GM12878 (cell line): ENCODE measurements at regions of chr4 and their contacts with region 1.

Region 1: GRCh38 chr4:129641179-129641578 is 545.2 kb downstream of the C4orf33 start:
- DNase-seq: peak; percentile 8
- ATAC-seq: peak; percentile 82
- H3K4me3 ChIP-seq: no peak overlapping the region
- H3K27ac ChIP-seq: no peak overlapping the region
- H3K4me1 ChIP-seq: no peaks in the 10 kb centered on the region
- H3K27me3 ChIP-seq: no peaks in the 10 kb centered on the region
- CTCF ChIP-seq: peak; percentile 69 to 80 (median 74)
- EP300 ChIP-seq: no peak
- POLR2A ChIP-seq: no peak
- RAD21 ChIP-seq: peak; percentile 66

Region 2: GRCh38 chr4:129362674-129363274 is 278.4 kb before region 1 on chr4:
- CTCF ChIA-PET with region 1: interaction called, 145 read pairs
- POLR2A ChIA-PET with region 1: no interaction called
- RAD21 ChIA-PET with region 1: interaction called, 37 read pairs
- SMC1A ChIA-PET with region 1: interaction called, 38 read pairs
- in situ Hi-C with region 1: loop called (anchors 5 kb)
- intact Hi-C with region 1: loop called (anchors 1 kb)
- DNase-seq: peak; percentile 13
- ATAC-seq: peak; percentile 83
- H3K4me3 ChIP-seq: no peak overlapping the region
- H3K27ac ChIP-seq: no peak overlapping the region
- H3K4me1 ChIP-seq: no peaks in the 10 kb centered on the region
- H3K27me3 ChIP-seq: no peaks in the 10 kb centered on the region; a peak in 1 of 4 replicates
- CTCF ChIP-seq: peak; percentile 69 to 83 (median 81)
- EP300 ChIP-seq: no peak
- POLR2A ChIP-seq: no peak
- RAD21 ChIP-seq: peak; percentile 85

Region 3: GRCh38 chr4:129403848-129404247 is 237.3 kb before region 1 on chr4:
- CTCF ChIA-PET with region 1: no interaction called
- POLR2A ChIA-PET with region 1: no interaction called
- RAD21 ChIA-PET with region 1: no interaction called
- SMC1A ChIA-PET with region 1: no interaction called
- in situ Hi-C with region 1: no loop called
- intact Hi-C with region 1: no loop called
- DNase-seq: no peak
- ATAC-seq: no peak
- H3K4me3 ChIP-seq: no peak overlapping the region
- H3K27ac ChIP-seq: no peak overlapping the region
- H3K4me1 ChIP-seq: no peaks in the 10 kb centered on the region
- H3K27me3 ChIP-seq: no peaks in the 10 kb centered on the region
- CTCF ChIP-seq: no peak
- EP300 ChIP-seq: no peak
- POLR2A ChIP-seq: no peak
- RAD21 ChIP-seq: no peak

Region 4: DNA sequence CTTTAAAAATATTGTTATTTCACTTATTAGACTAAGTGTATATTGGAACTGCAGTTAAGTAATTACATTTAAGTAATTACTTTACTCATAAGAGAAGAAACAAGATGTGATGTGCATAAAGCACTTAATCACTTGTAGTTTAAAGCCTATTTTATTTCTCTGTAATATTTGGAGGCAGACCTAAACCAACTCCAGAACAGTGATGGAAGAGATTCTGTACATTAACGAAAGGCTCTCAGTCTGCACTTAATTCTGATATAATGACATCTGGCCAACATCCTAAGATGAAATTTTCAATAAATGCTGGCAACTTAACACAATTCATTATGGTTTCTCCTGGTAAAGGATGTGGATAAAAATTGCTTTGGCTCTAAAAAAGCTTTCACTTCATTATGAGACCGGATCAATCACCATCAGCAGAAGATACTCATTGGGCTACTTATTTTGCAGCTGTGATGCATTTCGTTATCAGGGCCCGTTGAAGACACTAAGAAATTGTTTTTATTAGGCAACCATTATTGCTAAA is 202.7 kb before region 1 on chr4:
- CTCF ChIA-PET with region 1: no interaction called
- POLR2A ChIA-PET with region 1: no interaction called
- RAD21 ChIA-PET with region 1: no interaction called
- SMC1A ChIA-PET with region 1: no interaction called
- in situ Hi-C with region 1: no loop called
- intact Hi-C with region 1: no loop called
- DNase-seq: no peak
- ATAC-seq: no peak
- H3K4me3 ChIP-seq: no peak overlapping the region
- H3K27ac ChIP-seq: no peak overlapping the region
- H3K4me1 ChIP-seq: no peaks in the 10 kb centered on the region
- H3K27me3 ChIP-seq: no peaks in the 10 kb centered on the region
- CTCF ChIP-seq: no peak
- EP300 ChIP-seq: no peak
- POLR2A ChIP-seq: no peak
- RAD21 ChIP-seq: no peak

Region 5: DNA sequence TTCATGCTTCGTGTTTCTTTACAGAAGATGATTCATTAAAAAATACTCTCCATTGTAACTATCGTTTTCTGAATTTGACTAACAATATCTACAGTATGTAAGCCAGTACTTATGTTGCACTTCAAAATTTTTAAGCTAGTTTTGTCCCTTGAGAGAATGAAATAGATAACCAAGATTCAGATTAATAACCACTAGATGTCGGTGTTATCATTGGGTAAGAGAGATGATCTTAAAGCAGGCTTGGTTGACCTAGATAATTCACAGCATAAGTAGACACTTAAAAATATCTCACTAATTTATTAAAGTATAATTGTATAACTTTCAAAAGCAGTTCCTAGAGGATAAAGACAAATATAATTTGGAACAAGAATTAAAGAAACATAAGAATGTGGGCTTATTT is 114.4 kb before region 1 on chr4:
- CTCF ChIA-PET with region 1: interaction called, 11 read pairs
- POLR2A ChIA-PET with region 1: no interaction called
- RAD21 ChIA-PET with region 1: interaction called, 11 read pairs
- SMC1A ChIA-PET with region 1: interaction called, 5 read pairs
- in situ Hi-C with region 1: no loop called
- intact Hi-C with region 1: loop called (anchors 1 kb)
- DNase-seq: no peak
- ATAC-seq: peak; percentile 41; the same call in 2 of the 3 replicates
- H3K4me3 ChIP-seq: no peak overlapping the region
- H3K27ac ChIP-seq: no peak overlapping the region
- H3K4me1 ChIP-seq: no peaks in the 10 kb centered on the region
- H3K27me3 ChIP-seq: no peaks in the 10 kb centered on the region; a peak in 1 of 4 replicates
- CTCF ChIP-seq: peak in 1 of 3 experiments; percentile 39; a peak in 1 of 6 replicates
- EP300 ChIP-seq: no peak
- POLR2A ChIP-seq: no peak
- RAD21 ChIP-seq: peak; percentile 19; the same call in 1 of the 2 replicates

Region 6: DNA sequence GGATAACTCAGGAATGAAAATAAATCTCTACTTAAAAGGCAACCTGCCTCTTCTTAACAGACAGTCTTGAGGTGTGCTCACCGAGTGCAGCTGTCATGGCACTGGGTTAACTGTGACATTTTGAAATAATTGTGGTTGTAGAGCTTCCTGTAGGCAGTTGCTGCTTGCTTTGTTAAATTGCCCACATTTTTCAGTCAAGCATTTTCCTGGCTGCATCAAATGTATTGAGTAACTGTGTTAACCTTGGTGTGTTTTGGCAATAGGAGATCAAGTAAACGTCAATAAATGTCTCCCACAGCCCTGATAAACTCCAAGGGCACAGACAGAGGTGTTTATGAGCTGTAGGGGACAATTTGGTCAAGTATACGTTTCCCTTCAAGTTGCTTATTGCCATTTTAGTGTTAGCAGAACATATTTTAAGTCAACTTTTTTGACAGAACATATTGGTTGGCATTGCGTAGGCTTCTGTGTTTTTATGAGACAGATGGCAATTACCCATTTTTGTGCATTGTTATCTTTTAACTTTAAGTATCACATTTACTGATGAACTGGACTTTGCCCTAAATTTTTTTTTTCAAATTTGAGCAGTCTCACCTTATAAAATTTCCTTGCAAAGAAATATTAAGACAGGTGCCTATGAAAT is 17.8 kb before region 1 on chr4:
- CTCF ChIA-PET with region 1: interaction called, 16 read pairs
- POLR2A ChIA-PET with region 1: no interaction called
- RAD21 ChIA-PET with region 1: no interaction called
- SMC1A ChIA-PET with region 1: interaction called, 3 read pairs
- in situ Hi-C with region 1: no loop called
- intact Hi-C with region 1: no loop called
- DNase-seq: no peak
- ATAC-seq: no peak
- H3K4me3 ChIP-seq: no peak overlapping the region
- H3K27ac ChIP-seq: no peak overlapping the region
- H3K4me1 ChIP-seq: no peaks in the 10 kb centered on the region
- H3K27me3 ChIP-seq: no peaks in the 10 kb centered on the region
- CTCF ChIP-seq: no peak
- EP300 ChIP-seq: no peak
- POLR2A ChIP-seq: no peak
- RAD21 ChIP-seq: no peak

Region 7: GRCh38 chr4:129788486-129788885 is 147.3 kb after region 1 on chr4:
- CTCF ChIA-PET with region 1: no interaction called
- POLR2A ChIA-PET with region 1: no interaction called
- RAD21 ChIA-PET with region 1: no interaction called
- SMC1A ChIA-PET with region 1: no interaction called
- in situ Hi-C with region 1: no loop called
- intact Hi-C with region 1: no loop called
- DNase-seq: no peak
- ATAC-seq: no peak
- H3K4me3 ChIP-seq: no peak overlapping the region
- H3K27ac ChIP-seq: no peak overlapping the region
- H3K4me1 ChIP-seq: no peaks in the 10 kb centered on the region
- H3K27me3 ChIP-seq: no peaks in the 10 kb centered on the region
- CTCF ChIP-seq: no peak
- EP300 ChIP-seq: no peak
- POLR2A ChIP-seq: no peak
- RAD21 ChIP-seq: no peak

Region 8: DNA sequence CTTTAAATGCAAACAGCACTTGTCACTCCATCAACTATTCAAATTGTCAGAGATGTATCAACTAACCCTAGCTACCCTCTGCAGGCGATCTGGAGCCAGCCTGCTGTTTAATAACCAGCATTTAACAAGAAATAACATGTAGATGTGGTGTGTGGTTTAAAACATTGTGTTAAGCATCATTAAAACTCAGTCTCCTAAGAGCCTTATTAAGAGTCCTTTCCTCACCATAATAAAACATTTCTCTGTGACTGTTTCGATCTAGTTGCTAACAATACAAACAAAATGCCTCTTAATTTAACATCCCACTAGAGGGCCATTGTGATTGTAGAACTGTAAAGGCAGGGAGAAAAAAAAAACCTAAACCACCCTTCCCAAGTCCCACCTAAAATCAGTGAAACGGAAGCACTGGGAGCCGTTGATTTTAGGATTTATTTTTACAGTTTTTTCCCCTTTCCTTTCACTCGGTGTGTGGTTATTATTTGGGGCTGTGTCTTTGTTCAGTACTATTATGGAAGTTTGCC is 163.3 kb after region 1 on chr4:
- CTCF ChIA-PET with region 1: no interaction called
- POLR2A ChIA-PET with region 1: no interaction called
- RAD21 ChIA-PET with region 1: no interaction called
- SMC1A ChIA-PET with region 1: no interaction called
- in situ Hi-C with region 1: no loop called
- intact Hi-C with region 1: no loop called
- DNase-seq: no peak
- ATAC-seq: no peak
- H3K4me3 ChIP-seq: no peak overlapping the region
- H3K27ac ChIP-seq: no peak overlapping the region
- H3K4me1 ChIP-seq: no peaks in the 10 kb centered on the region
- H3K27me3 ChIP-seq: no peaks in the 10 kb centered on the region
- CTCF ChIP-seq: no peak
- EP300 ChIP-seq: no peak
- POLR2A ChIP-seq: no peak
- RAD21 ChIP-seq: no peak